Activated CD8-positive, alpha-beta T cell treated with anti-CD3 and anti-CD28 coated beads, Interleukin-2, amount 10 ng/mL, durations not matched to agents 7 days and 5 days (primary cell): ENCODE measurements at regions of chr1 and their contacts with region 1.

Region 1: DNA sequence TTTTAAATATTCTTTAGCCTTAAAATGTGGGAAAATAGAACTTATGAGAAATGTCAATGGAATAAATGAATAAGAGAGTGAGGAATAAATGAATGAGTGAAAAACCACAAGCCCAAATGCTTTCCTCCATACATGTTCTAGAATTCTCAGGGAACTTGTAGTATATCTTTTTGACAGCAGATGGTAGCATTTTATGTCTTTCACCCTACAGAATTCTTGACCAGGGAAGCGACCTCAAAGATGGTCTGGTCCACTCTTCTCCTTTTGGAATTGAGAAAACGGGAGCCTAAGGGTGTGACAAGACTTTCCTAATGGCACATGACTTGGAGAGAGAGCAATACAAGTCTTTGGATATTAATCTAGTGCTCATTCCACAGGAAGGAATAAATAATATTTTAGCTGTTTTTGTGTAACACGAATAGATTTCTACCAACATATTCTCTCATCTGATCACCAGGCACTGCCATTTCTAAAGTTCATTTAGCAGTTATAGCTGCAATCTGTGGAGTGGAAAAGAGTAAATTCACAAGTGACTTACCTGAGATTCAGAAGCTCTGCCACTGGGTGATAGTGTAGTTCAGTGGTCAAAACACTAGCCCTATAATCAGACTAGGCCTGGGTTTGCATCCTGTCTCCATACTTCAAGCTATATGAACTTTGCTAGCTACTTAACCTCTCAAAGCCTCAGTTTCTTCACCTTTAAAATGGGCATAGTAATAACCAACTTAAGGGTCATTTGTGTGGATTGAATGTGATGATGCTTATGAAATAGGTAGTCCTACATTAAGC is 15.0 kb upstream of the F5 start:
- DNase-seq: no peak
- ATAC-seq: no peak
- H3K4me3 Mint-ChIP-seq: no peak overlapping the region
- H3K27ac Mint-ChIP-seq: peak overlapping the region; percentile 14
- H3K4me1 Mint-ChIP-seq: peaks cover 51% of the 10 kb centered on the region
- H3K27me3 Mint-ChIP-seq: no peaks in the 10 kb centered on the region

Region 2: GRCh38 chr1:169363046-169363730 is 238.1 kb before region 1 on chr1:
- CTCF ChIA-PET with region 1: no interaction called
- POLR2A ChIA-PET with region 1: no interaction called
- DNase-seq: peak; percentile 55
- ATAC-seq: peak; percentile 12
- H3K4me3 Mint-ChIP-seq: peak overlapping the region; percentile 32
- H3K27ac Mint-ChIP-seq: peak overlapping the region; percentile 66
- H3K4me1 Mint-ChIP-seq: peaks cover 22% of the 10 kb centered on the region
- H3K27me3 Mint-ChIP-seq: no peaks in the 10 kb centered on the region

Region 3: GRCh38 chr1:169586395-169587255 is 14.7 kb before region 1 on chr1 and contains the start of gene F5:
- CTCF ChIA-PET with region 1: interaction called, 55 read pairs
- POLR2A ChIA-PET with region 1: interaction called, 4 read pairs
- DNase-seq: peak; percentile 86
- ATAC-seq: peak; percentile 100
- H3K4me3 Mint-ChIP-seq: peak within 1 kb of the TSS; percentile 78
- H3K27ac Mint-ChIP-seq: peak within 1 kb of the TSS; percentile 83
- H3K4me1 Mint-ChIP-seq: peaks cover 51% of the 10 kb centered on the region
- H3K27me3 Mint-ChIP-seq: no peaks in the 10 kb centered on the region
- total RNA-seq, gene F5: 1.4 to 1.6 TPM

Region 4: DNA sequence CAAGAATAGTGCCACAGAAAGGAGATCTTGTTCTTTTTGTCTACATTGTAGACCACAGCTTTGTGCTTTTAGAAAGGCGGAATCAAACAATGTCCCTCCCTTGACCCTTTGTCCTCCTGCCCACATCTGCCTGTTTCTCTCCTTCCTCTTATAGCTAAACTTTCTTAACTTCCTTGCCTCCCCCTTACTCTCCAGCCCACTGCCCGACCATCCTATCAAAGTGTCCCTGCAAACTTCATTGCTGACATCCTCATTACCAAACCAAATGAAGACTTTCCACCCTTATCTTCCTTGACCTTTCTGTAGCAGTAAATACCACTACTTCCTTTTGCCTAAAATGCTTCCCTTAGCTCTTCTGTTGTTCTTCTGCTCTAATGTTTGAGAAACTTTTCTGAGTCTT is 23.6 kb after region 1 on chr1:
- CTCF ChIA-PET with region 1: interaction called, 11 read pairs
- POLR2A ChIA-PET with region 1: no interaction called
- DNase-seq: no peak
- ATAC-seq: no peak
- H3K4me3 Mint-ChIP-seq: no peak overlapping the region
- H3K27ac Mint-ChIP-seq: peak overlapping the region; percentile 28
- H3K4me1 Mint-ChIP-seq: peaks cover 57% of the 10 kb centered on the region
- H3K27me3 Mint-ChIP-seq: no peaks in the 10 kb centered on the region

Region 5: GRCh38 chr1:169644298-169644697 is 43.0 kb after region 1 on chr1:
- CTCF ChIA-PET with region 1: interaction called, 10 read pairs
- POLR2A ChIA-PET with region 1: no interaction called
- DNase-seq: no peak
- ATAC-seq: no peak
- H3K4me3 Mint-ChIP-seq: no peak overlapping the region
- H3K27ac Mint-ChIP-seq: no peak overlapping the region
- H3K4me1 Mint-ChIP-seq: peaks cover 17% of the 10 kb centered on the region
- H3K27me3 Mint-ChIP-seq: no peaks in the 10 kb centered on the region

Region 6: GRCh38 chr1:169694304-169695075 is 93.2 kb after region 1 on chr1:
- CTCF ChIA-PET with region 1: interaction called, 253 read pairs
- POLR2A ChIA-PET with region 1: interaction called, 44 read pairs
- DNase-seq: peak; percentile 72
- ATAC-seq: peak; percentile 73
- H3K4me3 Mint-ChIP-seq: peak overlapping the region; percentile 27
- H3K27ac Mint-ChIP-seq: peak overlapping the region; percentile 87
- H3K4me1 Mint-ChIP-seq: peaks cover 94% of the 10 kb centered on the region
- H3K27me3 Mint-ChIP-seq: no peaks in the 10 kb centered on the region

Region 7: GRCh38 chr1:169794530-169795416 is 193.5 kb after region 1 on chr1 and contains the start of gene METTL18:
- CTCF ChIA-PET with region 1: interaction called, 20 read pairs
- POLR2A ChIA-PET with region 1: interaction called, 6 read pairs
- DNase-seq: peak; percentile 96
- ATAC-seq: peak; percentile 96
- H3K4me3 Mint-ChIP-seq: peak within 1 kb of the TSS; percentile 80
- H3K27ac Mint-ChIP-seq: peak within 1 kb of the TSS; percentile 85
- H3K4me1 Mint-ChIP-seq: peaks cover 54% of the 10 kb centered on the region
- H3K27me3 Mint-ChIP-seq: no peaks in the 10 kb centered on the region
- total RNA-seq, gene METTL18: 9.8 to 10.2 TPM

Region 8: GRCh38 chr1:169809370-169810095 is 208.2 kb after region 1 on chr1:
- CTCF ChIA-PET with region 1: interaction called, 17 read pairs
- POLR2A ChIA-PET with region 1: no interaction called
- DNase-seq: peak; percentile 28
- ATAC-seq: no peak
- H3K4me3 Mint-ChIP-seq: no peak overlapping the region
- H3K27ac Mint-ChIP-seq: no peak overlapping the region
- H3K4me1 Mint-ChIP-seq: peaks cover 8% of the 10 kb centered on the region
- H3K27me3 Mint-ChIP-seq: no peaks in the 10 kb centered on the region